ENCODE measurements at regions of chr5 and their contacts with region 1.

Region 1: DNA sequence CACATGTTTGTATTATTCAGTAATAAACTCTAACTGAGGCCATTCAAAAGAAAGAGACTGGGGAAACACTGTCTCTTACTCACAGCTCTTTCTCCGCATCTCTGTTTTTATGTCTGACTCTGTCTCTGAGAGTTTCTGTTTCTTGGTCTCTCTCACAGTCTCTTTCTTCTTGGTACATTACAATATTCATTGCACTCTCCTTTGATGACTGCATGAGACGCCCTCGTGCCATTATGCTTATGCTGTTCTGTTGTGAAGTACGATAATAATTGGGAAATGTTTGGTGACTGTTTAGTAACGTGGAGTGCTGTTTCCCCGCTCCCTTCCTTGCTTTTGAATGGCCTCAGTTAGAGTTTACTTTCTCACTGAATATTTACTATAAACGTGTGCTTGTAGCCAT is 25.3 kb upstream of the TLX3 start:
- DNase-seq: no peak

Region 2: GRCh38 chr5:171221941-171222340 is 61.8 kb before region 1 on chr5:
- intact Hi-C with region 1: loop called in 1 of 2 experiments (anchors 2 kb)
- DNase-seq: no peak

Region 3: DNA sequence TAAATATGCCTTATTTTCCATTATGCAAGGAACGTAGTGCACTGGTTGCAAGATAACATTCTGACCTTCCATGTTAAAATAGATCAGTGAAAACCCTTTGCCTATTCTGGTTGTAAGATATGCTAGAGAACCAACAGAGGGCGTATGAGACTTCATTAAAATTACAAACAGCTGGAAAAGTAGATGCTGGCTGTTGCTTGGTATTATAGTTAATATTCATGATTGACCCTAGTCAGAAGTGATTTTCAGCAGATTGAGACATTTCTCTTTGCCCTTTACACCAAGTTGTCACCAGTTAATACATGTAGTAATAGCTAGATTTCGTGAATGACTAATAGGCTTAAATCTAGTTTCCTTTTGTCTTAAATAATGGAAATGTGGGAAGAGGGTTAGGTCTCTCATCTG is 121.8 kb after region 1 on chr5:
- intact Hi-C with region 1: no loop called
- DNase-seq: no peak

Measured in posterior vena cava (tissue), 2 donors.